Activated CD8-positive, alpha-beta memory T cell treated with anti-CD3 and anti-CD28 coated beads, Interleukin-2, amount 10 ng/mL, durations not matched to agents 7 days and 5 days (primary cell): ENCODE measurements at regions of chr1 and their contacts with region 1.

Region 1: DNA sequence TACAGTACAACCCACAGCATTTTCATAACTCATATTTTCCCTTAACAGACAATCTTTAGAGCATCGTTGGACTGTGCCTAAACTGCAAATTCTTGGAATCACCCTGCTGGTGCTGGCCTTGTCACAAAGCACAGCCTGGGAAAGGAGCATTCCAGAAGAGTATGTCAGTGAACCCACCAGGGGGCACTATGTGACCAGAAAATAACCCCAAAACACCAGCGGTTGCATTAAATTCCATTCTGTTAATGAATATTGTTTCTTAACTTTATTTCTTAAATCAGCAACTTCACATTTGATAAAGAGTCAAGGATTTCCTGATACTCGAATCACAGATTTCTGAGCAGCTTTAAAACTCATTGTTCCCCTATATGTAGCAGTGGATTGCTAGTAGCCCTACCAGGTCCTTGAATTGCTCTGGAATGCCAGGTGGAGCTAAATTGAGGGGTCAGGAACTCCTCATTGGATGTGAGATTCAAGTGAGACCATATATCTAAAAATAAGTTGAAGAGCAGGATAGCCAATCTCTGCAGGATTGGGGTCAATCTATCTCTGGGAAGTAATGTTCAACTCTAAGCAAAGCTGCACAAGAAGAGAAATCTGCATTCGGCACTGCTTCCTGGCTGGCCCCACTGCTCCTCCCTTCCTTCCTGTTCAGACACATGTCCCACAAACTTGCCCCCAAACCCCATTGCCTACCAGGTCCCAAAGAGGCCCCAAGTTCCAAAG is 12.7 kb upstream of the RAB4A start:
- DNase-seq: peak; percentile 65
- ATAC-seq: peak; percentile 63
- H3K4me3 Mint-ChIP-seq: no peak overlapping the region
- H3K27ac Mint-ChIP-seq: peak overlapping the region; percentile 53
- H3K4me1 Mint-ChIP-seq: peaks cover 28% of the 10 kb centered on the region
- H3K27me3 Mint-ChIP-seq: peaks cover 3% of the 10 kb centered on the region

Region 2: GRCh38 chr1:228734881-228735801 is 523.1 kb before region 1 on chr1 and contains the start of gene RHOU:
- CTCF ChIA-PET with region 1: interaction called, 12 read pairs
- DNase-seq: peak; percentile 72
- ATAC-seq: peak; percentile 94
- H3K4me3 Mint-ChIP-seq: peak within 1 kb of the TSS; percentile 77
- H3K27ac Mint-ChIP-seq: no peak within 1 kb of the TSS
- H3K4me1 Mint-ChIP-seq: peaks cover 10% of the 10 kb centered on the region
- H3K27me3 Mint-ChIP-seq: peaks cover 57% of the 10 kb centered on the region
- total RNA-seq, gene RHOU: 0.61 to 4.5 TPM

Region 3: DNA sequence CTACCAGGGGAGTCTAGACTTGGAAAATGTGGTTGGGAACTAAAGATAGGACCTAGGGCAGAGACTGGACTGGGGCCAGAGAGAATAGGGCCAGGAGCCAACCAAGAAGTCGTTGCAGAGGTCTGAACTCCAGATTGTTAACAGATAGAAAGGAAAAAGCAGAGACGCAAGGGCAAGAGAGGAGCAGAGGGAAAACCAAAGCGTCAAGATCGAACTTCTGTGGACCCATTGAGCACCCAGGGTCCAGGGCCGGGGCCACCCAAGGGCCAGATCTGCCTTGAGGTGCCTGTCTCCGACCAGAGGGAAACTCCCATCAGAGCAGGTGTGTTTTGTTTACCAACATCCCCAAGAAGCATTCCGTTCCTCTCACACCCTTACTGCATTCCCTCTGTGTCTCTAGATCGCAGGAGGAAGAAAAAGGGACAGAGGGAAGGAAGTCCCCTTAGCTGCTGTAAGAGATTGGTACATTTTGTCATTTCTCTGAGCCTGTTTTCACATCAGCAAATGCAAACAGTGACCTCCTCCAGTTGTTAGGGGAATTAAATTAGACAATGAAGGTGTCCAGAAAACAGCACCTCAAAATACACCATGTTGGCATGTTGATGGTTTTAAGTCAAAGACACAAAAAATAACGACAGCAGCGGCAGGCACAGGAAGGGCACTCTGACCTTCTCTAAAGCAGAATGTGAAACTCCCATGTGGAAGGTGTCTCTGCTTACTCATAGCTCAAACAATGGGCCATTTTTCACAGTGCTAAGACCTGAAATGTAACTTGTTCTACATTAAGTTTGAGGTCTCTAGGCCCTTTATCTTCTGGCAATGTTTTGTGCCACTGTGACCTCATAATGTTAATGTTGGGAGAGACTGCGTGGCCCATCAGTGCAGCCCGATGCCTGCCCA is 93.1 kb before region 1 on chr1:
- CTCF ChIA-PET with region 1: no interaction called
- DNase-seq: no peak
- ATAC-seq: no peak
- H3K4me3 Mint-ChIP-seq: no peak overlapping the region
- H3K27ac Mint-ChIP-seq: no peak overlapping the region
- H3K4me1 Mint-ChIP-seq: peaks cover 5% of the 10 kb centered on the region
- H3K27me3 Mint-ChIP-seq: peaks cover 4% of the 10 kb centered on the region

Region 4: GRCh38 chr1:229270547-229271447 is 12.6 kb after region 1 on chr1 and contains the start of gene RAB4A:
- CTCF ChIA-PET with region 1: interaction called, 11 read pairs
- DNase-seq: peak; percentile 83
- ATAC-seq: peak; percentile 93
- H3K4me3 Mint-ChIP-seq: peak within 1 kb of the TSS; percentile 85
- H3K27ac Mint-ChIP-seq: peak within 1 kb of the TSS; percentile 64
- H3K4me1 Mint-ChIP-seq: peaks cover 21% of the 10 kb centered on the region
- H3K27me3 Mint-ChIP-seq: no peaks in the 10 kb centered on the region
- total RNA-seq, gene RAB4A: 26.5 to 27.2 TPM

Region 5: GRCh38 chr1:229479660-229480399 is 221.6 kb after region 1 on chr1:
- CTCF ChIA-PET with region 1: interaction called, 114 read pairs
- DNase-seq: no peak
- ATAC-seq: no peak
- H3K4me3 Mint-ChIP-seq: no peak overlapping the region
- H3K27ac Mint-ChIP-seq: no peak overlapping the region
- H3K4me1 Mint-ChIP-seq: peaks cover 16% of the 10 kb centered on the region
- H3K27me3 Mint-ChIP-seq: no peaks in the 10 kb centered on the region

Region 6: GRCh38 chr1:229514578-229515275 is 256.5 kb after region 1 on chr1:
- CTCF ChIA-PET with region 1: interaction called, 36 read pairs
- DNase-seq: peak; percentile 68
- ATAC-seq: peak; percentile 92
- H3K4me3 Mint-ChIP-seq: no peak overlapping the region
- H3K27ac Mint-ChIP-seq: peak overlapping the region; percentile 1
- H3K4me1 Mint-ChIP-seq: peaks cover 5% of the 10 kb centered on the region
- H3K27me3 Mint-ChIP-seq: no peaks in the 10 kb centered on the region